ENCODE measurements at regions of chr18 and their contacts with region 1.

Region 1: GRCh38 chr18:35972197-35973052 is at the start of gene RMP24:
- DNase-seq: peak; percentile 89 to 99 (median 94)

Region 2: DNA sequence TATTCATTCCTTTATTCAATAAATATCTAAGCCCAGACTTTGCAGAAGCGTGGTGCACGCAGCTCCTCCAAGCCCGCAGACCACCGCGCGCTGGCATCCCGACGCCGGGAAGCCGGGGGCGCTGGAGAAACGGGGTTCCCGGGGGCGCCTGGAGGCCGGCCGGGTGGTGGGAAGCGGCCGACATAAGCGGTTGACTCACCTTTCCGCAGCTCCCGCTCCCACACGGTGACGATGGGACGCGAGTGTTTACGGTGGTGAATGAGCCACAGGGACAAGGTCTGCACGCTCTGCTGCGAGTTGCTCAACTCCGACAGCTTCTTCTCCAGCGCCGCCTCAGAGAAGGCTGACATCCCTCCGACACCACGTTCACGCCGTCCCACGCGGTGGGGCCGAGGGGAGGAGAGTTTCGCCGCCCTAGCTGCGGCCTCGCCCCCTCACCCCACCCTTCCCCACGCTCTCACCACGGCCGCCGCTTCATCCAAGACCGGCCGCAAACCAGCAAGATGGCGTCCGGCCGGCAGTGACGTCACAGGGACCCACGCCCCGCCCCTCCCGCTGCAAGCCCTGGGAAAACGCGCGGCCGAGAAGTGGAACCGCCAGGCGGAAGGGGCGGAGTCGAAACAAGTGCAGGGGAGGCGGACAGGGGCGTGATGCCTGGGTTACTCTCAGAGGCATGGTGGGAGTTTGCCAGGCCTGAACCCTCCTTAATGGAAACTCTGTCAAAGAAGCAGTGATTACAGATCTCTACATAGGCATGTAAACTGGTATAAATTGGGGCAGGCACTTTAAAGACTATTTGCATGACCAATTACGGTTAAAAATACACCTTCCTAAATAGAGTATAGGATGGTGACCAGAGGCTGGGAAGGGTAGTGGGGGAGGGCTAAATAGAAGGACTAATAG is 94.9 kb after region 1 on chr18 and contains the start of gene RPRD1A:
- intact Hi-C with region 1: loop called (anchors 5 kb)
- DNase-seq: peak; percentile 96 to 99 (median 99)

Region 3: DNA sequence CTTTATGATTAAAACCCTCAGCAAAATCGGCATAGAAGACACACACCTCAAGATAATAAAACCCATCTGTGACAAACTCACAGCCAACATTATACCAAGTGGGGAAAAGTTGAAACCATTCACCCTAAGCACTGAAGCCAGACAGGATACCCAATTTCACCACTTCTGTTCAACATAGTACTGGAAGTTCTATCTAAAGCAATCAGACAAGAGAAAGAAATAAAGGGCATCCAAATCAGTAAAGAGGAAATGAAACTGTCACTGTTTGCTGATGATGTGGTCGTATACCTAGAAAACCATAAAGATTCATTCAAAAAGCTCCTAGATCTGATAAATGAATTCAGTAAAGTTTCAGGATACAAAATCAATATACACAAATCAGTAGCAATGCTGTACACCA is 111.3 kb after region 1 on chr18:
- intact Hi-C with region 1: no loop called
- DNase-seq: no peak